ENCODE measurements at regions of chrX and their contacts with region 1.

Region 1: DNA sequence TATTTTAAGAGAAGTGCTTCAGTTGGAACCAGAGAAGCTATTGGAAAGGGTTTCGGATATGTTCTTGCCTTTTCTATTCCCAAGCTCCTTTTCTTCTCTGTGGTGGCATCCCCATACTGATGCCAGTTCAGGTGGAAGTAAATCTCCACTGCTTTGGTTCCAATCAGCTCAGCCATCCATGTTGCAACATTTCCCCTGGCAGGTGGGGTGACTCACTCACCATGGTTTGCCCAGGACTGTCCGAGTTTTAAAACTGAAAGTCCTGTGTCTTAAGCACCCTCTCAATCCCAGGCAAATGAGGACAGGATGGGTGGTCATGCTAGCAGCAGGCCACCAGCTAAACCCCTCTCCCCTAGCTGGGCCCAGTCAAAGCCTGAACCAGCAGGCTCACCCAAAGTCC is 15.1 kb downstream of the RAI2 start:
- DNase-seq: peak in 1 of 10 donors; percentile 12
- H3K4me3 ChIP-seq: no peak overlapping the region
- H3K27ac ChIP-seq: no peak overlapping the region
- H3K27me3 ChIP-seq: peaks cover 0 to 94% (median 33%) of the 10 kb centered on the region in 45 donors
- CTCF ChIP-seq: no peak

Region 2: GRCh38 chrX:17833954-17834353 is 12.1 kb before region 1 on chrX:
- intact Hi-C with region 1: loop called in 1 of 2 experiments (anchors 2 kb)
- DNase-seq: no peak
- H3K4me3 ChIP-seq: no peak overlapping the region
- H3K27ac ChIP-seq: no peak overlapping the region
- H3K27me3 ChIP-seq: peaks cover 0 to 79% (median 18%) of the 10 kb centered on the region in 45 donors
- CTCF ChIP-seq: no peak

Region 3: GRCh38 chrX:18010238-18010637 is 164.2 kb after region 1 on chrX:
- intact Hi-C with region 1: no loop called
- DNase-seq: no peak
- H3K4me3 ChIP-seq: no peak overlapping the region
- H3K27ac ChIP-seq: no peak overlapping the region
- H3K27me3 ChIP-seq: peaks cover 0 to 88% (median 25%) of the 10 kb centered on the region in 45 donors
- CTCF ChIP-seq: no peak

Measured in dorsolateral prefrontal cortex (tissue), 120 donors.